AG04449 (cell line): ENCODE measurements at regions of chr10 and their contacts with region 1.

Region 1: DNA sequence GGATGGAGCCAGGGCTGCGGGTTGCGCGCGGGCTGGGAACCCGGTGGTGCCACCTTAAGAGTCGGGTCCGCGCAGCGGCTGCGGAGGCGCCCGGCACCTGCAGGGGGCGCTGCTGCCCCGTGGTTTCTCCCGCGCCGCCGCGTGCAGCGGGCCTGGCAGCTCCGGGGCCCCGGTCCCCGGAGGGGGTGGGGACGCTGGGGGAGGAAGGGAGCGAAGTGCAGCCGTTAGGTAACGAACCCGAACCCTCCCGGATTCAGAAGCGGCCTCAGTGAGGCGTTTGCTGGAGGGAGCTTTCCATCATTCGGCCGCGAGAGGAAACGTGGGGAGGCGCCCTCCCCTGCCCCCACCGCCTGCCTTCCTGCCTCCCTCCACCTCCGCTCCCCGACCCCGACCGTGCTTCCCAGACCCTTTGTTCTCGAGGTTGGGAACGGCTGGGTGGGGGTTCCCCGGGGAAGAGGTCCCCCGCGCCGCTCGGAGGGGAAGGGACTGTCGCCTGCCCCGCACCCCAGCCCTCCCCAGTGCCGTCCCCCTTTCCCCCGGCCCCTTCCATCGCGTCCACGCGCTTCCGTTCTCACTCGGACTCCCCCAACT is 29.6 kb downstream of the SKIDA1 start:
- DNase-seq: no peak
- H3K4me3 ChIP-seq: peak overlapping the region; percentile 85
- CTCF ChIP-seq: peak; percentile 89

Region 2: DNA sequence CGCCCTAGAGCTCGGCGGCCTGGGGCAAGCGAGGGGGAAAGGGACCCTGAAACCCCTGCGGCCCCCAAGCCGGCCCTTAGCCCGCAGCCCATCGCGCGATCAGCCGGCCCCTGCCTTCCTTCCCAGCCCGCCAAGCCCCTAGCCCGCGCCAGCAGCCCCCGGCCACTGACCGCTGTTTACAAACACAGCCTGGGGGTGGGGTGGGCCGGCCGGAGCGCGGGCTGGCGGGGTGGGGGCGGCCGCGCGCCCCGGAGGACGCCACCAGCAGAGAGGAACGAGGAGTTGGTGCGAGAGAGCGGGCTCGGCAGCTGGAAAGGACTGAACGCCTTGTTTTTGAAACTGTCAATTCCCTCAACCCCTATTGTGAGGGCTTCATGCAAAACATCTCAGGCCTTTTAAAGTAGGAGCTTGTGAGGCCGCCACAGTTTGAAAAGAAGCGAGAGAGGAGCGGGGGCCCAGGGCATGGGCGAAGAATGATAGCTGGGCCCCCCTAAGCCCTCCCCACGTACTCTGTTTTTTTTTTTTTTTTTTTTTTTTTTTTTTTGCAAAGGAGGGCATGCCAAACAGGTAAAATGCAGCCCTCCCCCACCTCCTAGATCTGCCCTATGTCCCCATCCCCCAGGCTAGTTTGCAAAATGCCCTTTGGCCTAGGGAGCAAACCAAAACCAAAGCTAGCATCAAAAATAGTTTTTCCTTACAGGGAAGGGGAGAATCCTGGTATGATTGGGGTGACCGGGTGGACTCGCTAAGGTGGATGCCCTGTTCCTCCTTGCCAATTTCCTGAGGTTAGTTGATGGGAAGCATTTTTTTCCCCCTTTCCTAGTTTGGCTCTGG is 14.6 kb after region 1 on chr10:
- CTCF ChIA-PET with region 1: interaction called, 51 read pairs
- POLR2A ChIA-PET with region 1: interaction called, 6 read pairs
- DNase-seq: no peak
- H3K4me3 ChIP-seq: peak overlapping the region; percentile 25
- CTCF ChIP-seq: no peak

Region 3: GRCh38 chr10:21525367-21526183 is 29.7 kb after region 1 on chr10 and contains the start of gene SKIDA1:
- CTCF ChIA-PET with region 1: interaction called, 16 read pairs
- POLR2A ChIA-PET with region 1: interaction called, 7 read pairs
- DNase-seq: no peak
- H3K4me3 ChIP-seq: peak within 1 kb of the TSS; percentile 68
- CTCF ChIP-seq: no peak

Region 4: DNA sequence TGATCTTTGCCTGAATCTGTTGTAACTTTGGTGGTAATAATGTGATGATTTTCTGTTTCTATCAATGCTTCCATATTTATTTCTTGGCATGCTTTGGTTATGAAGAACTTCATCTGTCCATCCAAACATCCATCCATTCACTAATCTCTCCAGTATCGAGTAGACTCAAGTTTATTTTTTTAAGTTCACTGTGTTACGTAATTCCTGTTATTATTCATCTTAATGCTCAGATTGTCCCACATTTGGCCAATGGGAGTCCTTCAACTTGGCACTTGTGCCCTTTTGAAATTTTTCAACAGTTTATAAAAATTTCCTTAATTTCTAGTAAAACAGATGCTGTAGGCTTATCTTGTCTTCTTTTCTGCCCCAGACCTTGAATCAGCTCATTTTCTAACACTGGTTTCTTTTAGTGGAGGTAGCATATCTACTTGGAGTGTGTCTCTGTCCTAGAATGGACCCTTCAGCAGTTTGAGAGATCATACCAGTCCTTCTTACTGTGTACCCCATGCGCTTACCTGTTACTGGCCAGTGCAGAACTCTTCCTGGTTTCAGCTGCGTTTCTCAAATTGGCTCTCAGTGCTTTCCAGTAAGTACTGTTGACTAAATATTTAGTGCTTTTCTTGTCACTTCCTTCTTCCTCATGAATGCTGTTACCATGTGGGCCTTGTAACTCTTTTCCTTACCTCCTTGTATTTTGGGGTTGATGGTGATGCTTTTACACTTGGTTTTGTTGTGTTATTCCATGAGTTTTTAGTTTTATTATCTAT is 138.9 kb after region 1 on chr10:
- CTCF ChIA-PET with region 1: no interaction called
- POLR2A ChIA-PET with region 1: no interaction called
- DNase-seq: no peak
- H3K4me3 ChIP-seq: no peak overlapping the region
- CTCF ChIP-seq: no peak

Region 5: GRCh38 chr10:21732067-21732772 is 236.4 kb after region 1 on chr10:
- CTCF ChIA-PET with region 1: interaction called, 19 read pairs
- POLR2A ChIA-PET with region 1: no interaction called
- DNase-seq: no peak
- H3K4me3 ChIP-seq: no peak overlapping the region
- CTCF ChIP-seq: peak; percentile 84